HepG2 (cell line): ENCODE measurements at regions of chr9 and their contacts with region 1.

Region 1: GRCh38 chr9:134171316-134172197 is 7.2 kb upstream of the RNU6ATAC start:
- DNase-seq: no peak
- ATAC-seq: no peak
- H3K4me3 ChIP-seq: peak overlapping the region in 2 of 3 experiments; percentile 24 to 63; a peak in 2 of 6 replicates
- H3K27ac ChIP-seq: no peak overlapping the region
- H3K4me1 ChIP-seq: peaks cover 28% of the 10 kb centered on the region
- H3K27me3 ChIP-seq: peaks cover 2 to 39% of the 10 kb centered on the region in 2 experiments; a peak in 4 of 5 replicates
- CTCF ChIP-seq: no peak
- EP300 ChIP-seq: no peak
- POLR2A ChIP-seq: no peak
- RAD21 ChIP-seq: no peak

Region 2: GRCh38 chr9:134217832-134218629 is 46.5 kb after region 1 on chr9:
- CTCF ChIA-PET with region 1: interaction called, 7 read pairs
- POLR2A ChIA-PET with region 1: no interaction called
- in situ Hi-C with region 1: loop called (anchors 5 kb)
- intact Hi-C with region 1: loop called (anchors 5 kb)
- DNase-seq: peak; percentile 70
- ATAC-seq: peak; percentile 47
- H3K4me3 ChIP-seq: no peak overlapping the region
- H3K27ac ChIP-seq: no peak overlapping the region
- H3K4me1 ChIP-seq: peaks cover 75% of the 10 kb centered on the region
- H3K27me3 ChIP-seq: peaks cover 9 to 21% of the 10 kb centered on the region in 2 experiments; a peak in 3 of 5 replicates
- CTCF ChIP-seq: peak; percentile 75
- EP300 ChIP-seq: no peak
- POLR2A ChIP-seq: no peak
- RAD21 ChIP-seq: peak; percentile 47

Region 3: GRCh38 chr9:134365791-134366688 is 194.5 kb after region 1 on chr9:
- CTCF ChIA-PET with region 1: no interaction called
- POLR2A ChIA-PET with region 1: no interaction called
- in situ Hi-C with region 1: no loop called
- intact Hi-C with region 1: loop called (anchors 5 kb)
- DNase-seq: no peak
- ATAC-seq: no peak
- H3K4me3 ChIP-seq: no peak overlapping the region
- H3K27ac ChIP-seq: peak overlapping the region; percentile 74
- H3K4me1 ChIP-seq: peaks cover 73% of the 10 kb centered on the region
- H3K27me3 ChIP-seq: no peaks in the 10 kb centered on the region
- CTCF ChIP-seq: no peak
- EP300 ChIP-seq: no peak
- POLR2A ChIP-seq: no peak
- RAD21 ChIP-seq: no peak

Region 4: GRCh38 chr9:134434894-134435506 is 263.4 kb after region 1 on chr9:
- CTCF ChIA-PET with region 1: no interaction called
- POLR2A ChIA-PET with region 1: interaction called, 5 read pairs
- in situ Hi-C with region 1: loop called (anchors 5 kb)
- intact Hi-C with region 1: loop called (anchors 2 kb)
- DNase-seq: peak; percentile 97
- ATAC-seq: peak; percentile 85
- H3K4me3 ChIP-seq: peak overlapping the region; percentile 10 to 56 (median 27); a peak in 3 of 6 replicates
- H3K27ac ChIP-seq: peak overlapping the region; percentile 78
- H3K4me1 ChIP-seq: peaks cover 60% of the 10 kb centered on the region
- H3K27me3 ChIP-seq: no peaks in the 10 kb centered on the region
- CTCF ChIP-seq: no peak
- EP300 ChIP-seq: 0 out of 4 replicates have a peak, but pooled peaks of 1 of the 2 experiments have one; percentile 4
- POLR2A ChIP-seq: no peak
- RAD21 ChIP-seq: peak; percentile 19; the same call in 1 of the 2 replicates

Region 5: DNA sequence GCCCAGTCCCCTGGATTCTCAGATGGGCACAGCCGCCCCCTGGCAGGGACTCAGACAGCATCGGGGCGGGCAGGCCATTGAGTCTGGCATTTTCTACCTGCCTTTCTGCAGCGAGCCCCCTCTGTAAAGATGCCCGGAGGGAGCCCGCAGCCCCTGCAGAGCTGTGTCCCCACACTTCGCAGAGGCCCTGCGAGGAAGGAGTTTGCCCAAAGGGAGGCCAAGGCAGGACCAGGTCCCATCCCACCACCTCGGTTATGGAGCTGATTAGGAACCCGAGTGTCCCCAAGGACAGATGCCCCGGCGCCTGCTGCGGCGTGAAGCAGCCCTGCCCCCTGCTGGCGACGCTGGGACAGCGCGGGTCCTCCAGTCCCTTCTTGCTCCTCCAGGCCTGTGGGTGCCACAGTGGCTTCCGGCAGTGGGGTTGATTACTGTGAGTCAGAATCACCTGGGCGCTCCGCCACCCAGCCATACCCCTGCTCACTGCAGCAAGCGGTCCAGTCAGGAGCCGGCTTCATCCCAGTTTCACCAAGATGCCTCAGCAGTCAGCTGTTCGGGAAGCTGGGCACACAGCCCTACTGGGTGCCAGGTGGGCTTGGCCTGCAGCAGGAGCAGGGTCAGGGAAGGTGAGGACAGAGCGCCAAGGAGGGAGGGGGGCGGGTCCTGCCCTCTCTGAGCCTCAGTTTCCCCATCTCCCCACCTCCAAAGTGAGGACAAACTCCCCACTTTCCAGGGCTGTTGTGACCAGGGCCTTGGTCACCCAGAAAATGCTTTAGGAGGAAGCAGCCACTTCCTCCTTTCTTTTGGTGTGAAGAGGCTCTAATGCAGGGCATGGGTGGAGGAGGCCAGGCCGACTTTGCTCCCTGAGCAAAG is 271.8 kb after region 1 on chr9:
- CTCF ChIA-PET with region 1: interaction called, 26 read pairs
- POLR2A ChIA-PET with region 1: interaction called, 4 read pairs
- in situ Hi-C with region 1: loop called (anchors 5 kb)
- intact Hi-C with region 1: loop called (anchors 1 kb)
- DNase-seq: peak; percentile 71
- ATAC-seq: peak; percentile 74
- H3K4me3 ChIP-seq: no peak overlapping the region; a peak in 1 of 6 replicates
- H3K27ac ChIP-seq: no peak overlapping the region
- H3K4me1 ChIP-seq: peaks cover 53% of the 10 kb centered on the region
- H3K27me3 ChIP-seq: peaks cover 0 to 17% of the 10 kb centered on the region in 2 experiments; a peak in 2 of 5 replicates
- CTCF ChIP-seq: peak; percentile 99
- EP300 ChIP-seq: no peak
- POLR2A ChIP-seq: no peak
- RAD21 ChIP-seq: peak; percentile 97